PC-9 (cell line): ENCODE measurements at regions of chr7 and their contacts with region 1.

Region 1: GRCh38 chr7:106461993-106462859 is 177.4 kb upstream of the NAMPT start:
- DNase-seq: peak; percentile 33 to 50
- H3K4me3 ChIP-seq: no peak overlapping the region
- H3K27ac ChIP-seq: peak overlapping the region; percentile 88
- H3K4me1 ChIP-seq: peaks cover 40% of the 10 kb centered on the region
- H3K27me3 ChIP-seq: no peaks in the 10 kb centered on the region
- CTCF ChIP-seq: peak; percentile 74

Region 2: DNA sequence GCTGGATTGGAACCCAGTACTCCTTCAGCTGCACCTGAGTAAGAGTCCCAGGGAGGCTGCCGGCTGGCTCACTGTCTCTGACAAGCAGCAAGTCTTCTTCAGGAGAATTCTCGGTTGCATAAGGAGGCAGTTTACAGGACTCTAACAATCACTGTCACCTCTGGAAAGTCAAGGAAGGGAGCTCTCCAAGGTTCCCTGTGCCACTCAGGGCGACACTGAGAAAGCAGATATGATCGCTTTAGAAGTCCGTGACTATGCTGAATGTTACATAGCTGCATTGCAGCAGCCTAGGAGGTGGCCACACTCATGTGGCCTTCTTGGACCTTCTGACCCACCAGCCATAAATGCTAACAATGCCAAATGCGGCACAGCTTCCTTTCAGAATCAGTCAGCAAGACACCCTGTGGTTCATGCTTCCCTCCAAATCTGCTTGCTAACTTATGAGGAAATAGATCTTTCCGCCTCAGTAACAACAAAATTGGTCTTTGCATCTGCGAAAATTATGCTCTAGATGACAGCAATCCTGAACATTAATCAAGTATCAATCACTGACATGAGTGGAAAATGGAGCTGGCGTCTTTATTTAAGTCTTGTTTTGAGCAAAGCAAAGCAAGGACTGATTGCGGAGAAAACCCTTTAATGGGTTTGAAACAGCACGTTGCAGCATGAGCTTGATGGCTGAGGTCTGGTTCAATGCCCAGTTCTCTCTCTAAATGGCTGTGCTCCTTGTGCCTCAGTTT is 718.7 kb before region 1 on chr7:
- CTCF ChIA-PET with region 1: interaction called, 16 read pairs
- POLR2A ChIA-PET with region 1: no interaction called
- intact Hi-C with region 1: no loop called
- DNase-seq: no peak
- H3K4me3 ChIP-seq: no peak overlapping the region
- H3K27ac ChIP-seq: no peak overlapping the region
- H3K4me1 ChIP-seq: peaks cover 3% of the 10 kb centered on the region; the same call in 1 of the 2 replicates
- H3K27me3 ChIP-seq: no peaks in the 10 kb centered on the region
- CTCF ChIP-seq: no peak

Region 3: GRCh38 chr7:106346678-106347217 is 115.5 kb before region 1 on chr7:
- CTCF ChIA-PET with region 1: no interaction called
- POLR2A ChIA-PET with region 1: interaction called, 4 read pairs
- intact Hi-C with region 1: loop called (anchors 1 kb)
- DNase-seq: peak; percentile 24 to 96
- H3K4me3 ChIP-seq: peak overlapping the region; percentile 41; the same call in 1 of the 2 replicates
- H3K27ac ChIP-seq: peak overlapping the region; percentile 98
- H3K4me1 ChIP-seq: peaks cover 38% of the 10 kb centered on the region
- H3K27me3 ChIP-seq: no peaks in the 10 kb centered on the region
- CTCF ChIP-seq: no peak

Region 4: GRCh38 chr7:106377847-106378361 is 84.3 kb before region 1 on chr7:
- CTCF ChIA-PET with region 1: interaction called, 6 read pairs
- POLR2A ChIA-PET with region 1: no interaction called
- intact Hi-C with region 1: loop called (anchors 1 kb)
- DNase-seq: peak; percentile 69 to 70
- H3K4me3 ChIP-seq: no peak overlapping the region
- H3K27ac ChIP-seq: peak overlapping the region; percentile 88
- H3K4me1 ChIP-seq: peaks cover 26% of the 10 kb centered on the region
- H3K27me3 ChIP-seq: no peaks in the 10 kb centered on the region
- CTCF ChIP-seq: no peak

Region 5: GRCh38 chr7:106425017-106425719 is 37.1 kb before region 1 on chr7:
- CTCF ChIA-PET with region 1: no interaction called
- POLR2A ChIA-PET with region 1: interaction called, 6 read pairs
- intact Hi-C with region 1: loop called (anchors 1 kb)
- DNase-seq: peak; percentile 57 to 89
- H3K4me3 ChIP-seq: peak overlapping the region; percentile 30; the same call in 1 of the 2 replicates
- H3K27ac ChIP-seq: peak overlapping the region; percentile 92
- H3K4me1 ChIP-seq: peaks cover 35% of the 10 kb centered on the region
- H3K27me3 ChIP-seq: no peaks in the 10 kb centered on the region
- CTCF ChIP-seq: no peak

Region 6: GRCh38 chr7:106443151-106443550 is 19.1 kb before region 1 on chr7:
- CTCF ChIA-PET with region 1: no interaction called
- POLR2A ChIA-PET with region 1: no interaction called
- intact Hi-C with region 1: no loop called
- DNase-seq: no peak
- H3K4me3 ChIP-seq: no peak overlapping the region
- H3K27ac ChIP-seq: no peak overlapping the region
- H3K4me1 ChIP-seq: peaks cover 11% of the 10 kb centered on the region
- H3K27me3 ChIP-seq: no peaks in the 10 kb centered on the region
- CTCF ChIP-seq: no peak

Region 7: GRCh38 chr7:106583101-106583500 is 120.9 kb after region 1 on chr7:
- CTCF ChIA-PET with region 1: no interaction called
- POLR2A ChIA-PET with region 1: no interaction called
- intact Hi-C with region 1: no loop called
- DNase-seq: no peak
- H3K4me3 ChIP-seq: no peak overlapping the region
- H3K27ac ChIP-seq: no peak overlapping the region
- H3K4me1 ChIP-seq: no peaks in the 10 kb centered on the region
- H3K27me3 ChIP-seq: no peaks in the 10 kb centered on the region
- CTCF ChIP-seq: no peak

Region 8: GRCh38 chr7:106659963-106660861 is 198.0 kb after region 1 on chr7:
- CTCF ChIA-PET with region 1: no interaction called
- POLR2A ChIA-PET with region 1: no interaction called
- intact Hi-C with region 1: loop called (anchors 5 kb)
- DNase-seq: peak; percentile 54 to 86
- H3K4me3 ChIP-seq: peak overlapping the region; percentile 81
- H3K27ac ChIP-seq: peak overlapping the region; percentile 71
- H3K4me1 ChIP-seq: peaks cover 19% of the 10 kb centered on the region
- H3K27me3 ChIP-seq: no peaks in the 10 kb centered on the region
- CTCF ChIP-seq: peak; percentile 77